ENCODE measurements at regions of chr16 and their contacts with region 1.

Region 1: DNA sequence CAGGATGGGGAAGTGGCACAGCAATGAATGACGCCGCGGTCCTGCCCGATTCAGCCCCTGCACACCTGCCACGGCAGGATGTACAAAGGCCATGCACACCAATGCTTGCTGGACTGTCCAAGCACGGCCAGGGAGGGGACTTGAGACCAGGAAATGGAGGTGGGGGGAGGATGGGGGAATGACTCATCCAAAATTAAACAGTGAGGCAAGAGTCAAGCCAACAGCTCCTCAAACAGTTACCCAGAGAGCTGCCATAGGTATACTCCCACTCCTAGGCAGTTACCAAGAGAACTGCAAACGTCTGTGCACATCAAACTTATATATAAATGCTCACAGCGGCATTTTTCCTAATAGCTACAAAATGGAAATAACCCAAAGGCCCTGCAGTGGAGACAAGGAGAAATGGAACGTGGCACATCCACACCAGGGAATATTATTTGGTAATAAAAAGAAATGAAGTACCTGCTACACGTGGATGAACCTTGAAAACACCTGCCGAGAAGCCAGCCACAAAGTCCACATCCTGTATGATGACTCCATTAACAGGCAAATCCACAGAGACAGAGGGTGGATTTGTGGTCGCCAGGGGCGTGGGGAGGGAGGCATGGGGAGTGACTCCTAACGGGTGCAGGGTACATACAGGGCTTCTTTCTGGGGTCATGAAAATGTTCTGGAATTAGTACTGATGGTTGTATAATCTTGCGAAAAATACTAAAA is 54.1 kb downstream of the VAC14 start:
- DNase-seq: peak; percentile 99
- ATAC-seq: peak; percentile 90
- H3K4me3 ChIP-seq: peak overlapping the region in 2 of 3 experiments; percentile 3 to 56; a peak in 2 of 6 replicates
- H3K27ac ChIP-seq: peak overlapping the region; percentile 93
- H3K4me1 ChIP-seq: peaks cover 56% of the 10 kb centered on the region
- H3K27me3 ChIP-seq: no peaks in the 10 kb centered on the region
- CTCF ChIP-seq: peak; percentile 40
- EP300 ChIP-seq: peak; percentile 92; a peak in 3 of 4 replicates
- POLR2A ChIP-seq: peak; percentile 70 to 75
- RAD21 ChIP-seq: no peak; the same call in 1 of the 2 replicates

Region 2: GRCh38 chr16:70523076-70523742 is 223.7 kb before region 1 on chr16 and contains the start of gene COG4:
- CTCF ChIA-PET with region 1: no interaction called
- POLR2A ChIA-PET with region 1: no interaction called
- in situ Hi-C with region 1: no loop called
- intact Hi-C with region 1: no loop called
- DNase-seq: peak; percentile 83
- ATAC-seq: peak; percentile 85
- H3K4me3 ChIP-seq: peak within 1 kb of the TSS; percentile 98 to 99 (median 99)
- H3K27ac ChIP-seq: peak within 1 kb of the TSS; percentile 93
- H3K4me1 ChIP-seq: peaks cover 40% of the 10 kb centered on the region
- H3K27me3 ChIP-seq: peaks cover 0 to 5% of the 10 kb centered on the region in 2 experiments; a peak in 1 of 5 replicates
- CTCF ChIP-seq: no peak
- EP300 ChIP-seq: peak in 1 of 2 experiments; percentile 3; a peak in 1 of 4 replicates
- POLR2A ChIP-seq: peak; percentile 73 to 94
- RAD21 ChIP-seq: no peak
- total RNA-seq, gene COG4: 73.8 and 85.7 TPM in 2 replicates

Region 3: DNA sequence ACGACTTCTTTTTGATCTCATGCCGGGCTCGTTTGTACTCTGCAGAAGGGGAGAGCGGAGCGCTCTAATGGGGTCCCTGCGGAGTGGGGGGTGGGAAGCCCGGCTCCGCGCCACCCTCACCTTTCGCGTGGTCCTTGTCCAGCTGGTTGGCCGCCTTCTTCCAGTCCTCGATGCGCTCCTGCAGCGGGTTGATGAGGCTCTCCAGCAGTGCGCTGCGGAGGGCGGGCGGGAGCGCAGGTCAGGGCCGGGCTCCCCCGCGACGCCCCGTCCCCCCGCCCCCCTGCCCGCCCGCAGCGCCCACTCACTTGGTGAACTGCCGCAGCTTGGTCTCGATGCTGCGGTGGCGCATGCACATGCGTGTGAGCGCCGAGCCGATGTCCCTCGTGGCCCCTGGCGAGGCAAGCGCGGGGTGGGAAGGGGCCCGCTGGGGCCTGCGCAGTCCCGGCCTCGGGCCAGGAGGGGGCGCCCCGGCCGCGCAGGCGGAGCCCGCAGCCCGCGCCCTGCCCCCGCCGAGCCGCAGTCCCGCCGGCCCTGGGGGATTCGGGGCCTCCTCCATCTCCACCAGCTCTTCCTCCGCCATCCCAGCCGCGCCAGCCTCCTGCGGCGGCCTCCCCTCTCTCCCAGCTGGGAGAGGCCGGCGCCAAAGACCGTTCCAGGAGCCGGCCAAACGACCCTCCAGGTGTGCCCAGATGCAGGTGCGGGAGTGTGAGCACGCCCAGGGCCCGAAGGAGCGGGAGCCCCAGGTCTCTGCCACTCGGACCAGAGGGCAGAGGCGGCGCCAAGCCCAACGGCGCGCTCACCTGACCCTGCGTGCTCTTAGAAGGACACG is 67.0 kb before region 1 on chr16:
- CTCF ChIA-PET with region 1: no interaction called
- POLR2A ChIA-PET with region 1: interaction called, 107 read pairs
- in situ Hi-C with region 1: no loop called
- intact Hi-C with region 1: loop called (anchors 2 kb)
- DNase-seq: no peak
- ATAC-seq: no peak
- H3K4me3 ChIP-seq: no peak overlapping the region; a peak in 1 of 6 replicates
- H3K27ac ChIP-seq: peak overlapping the region; percentile 91
- H3K4me1 ChIP-seq: peaks cover 39% of the 10 kb centered on the region
- H3K27me3 ChIP-seq: no peaks in the 10 kb centered on the region; a peak in 1 of 5 replicates
- CTCF ChIP-seq: peak; percentile 26; the same call in 1 of the 2 replicates
- EP300 ChIP-seq: no peak
- POLR2A ChIP-seq: no peak
- RAD21 ChIP-seq: peak; percentile 58; the same call in 1 of the 2 replicates

Region 4: DNA sequence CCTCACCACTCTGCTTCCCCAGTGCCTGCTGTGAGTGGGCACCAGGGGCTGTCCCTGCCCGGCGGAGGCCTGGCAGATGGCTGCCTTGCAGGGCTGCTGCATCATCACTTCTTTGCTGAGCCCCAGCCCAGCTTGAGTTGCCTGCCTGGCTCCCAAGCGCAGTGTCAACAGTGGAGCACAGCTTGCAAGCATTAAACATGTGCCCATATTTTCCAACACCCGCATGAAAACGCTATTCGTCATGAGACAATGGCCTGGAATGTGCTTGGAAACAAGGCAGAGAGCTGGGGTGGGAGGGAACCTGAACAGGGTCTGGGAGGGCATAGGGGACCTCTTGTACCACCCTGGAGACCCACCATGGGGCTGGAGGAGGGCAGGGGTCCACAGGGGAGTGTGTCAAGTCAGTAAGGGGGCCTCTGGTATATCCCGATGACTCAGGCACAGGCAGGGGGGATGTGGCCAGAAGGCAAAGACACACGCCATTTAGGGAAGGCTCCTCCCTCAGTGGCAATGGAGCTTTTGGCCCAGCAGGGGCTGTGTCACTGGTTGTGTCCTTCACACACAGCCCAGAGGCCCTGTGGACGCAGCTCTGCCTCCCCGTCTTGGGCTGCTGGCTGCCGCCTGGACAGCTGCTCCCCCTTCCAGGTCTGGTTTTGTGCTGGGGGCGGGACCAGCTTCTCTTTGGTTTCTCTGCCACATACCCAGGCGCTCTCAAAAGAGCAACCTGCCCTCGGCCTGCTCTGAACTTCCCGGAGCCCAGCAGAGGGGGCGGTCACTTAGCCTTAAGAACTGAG is 43.6 kb before region 1 on chr16:
- CTCF ChIA-PET with region 1: no interaction called
- POLR2A ChIA-PET with region 1: interaction called, 10 read pairs
- in situ Hi-C with region 1: no loop called
- intact Hi-C with region 1: no loop called
- DNase-seq: peak; percentile 79
- ATAC-seq: peak; percentile 91
- H3K4me3 ChIP-seq: peak overlapping the region in 1 of 3 experiments; percentile 21; a peak in 1 of 6 replicates
- H3K27ac ChIP-seq: peak overlapping the region; percentile 31
- H3K4me1 ChIP-seq: peaks cover 52% of the 10 kb centered on the region
- H3K27me3 ChIP-seq: no peaks in the 10 kb centered on the region
- CTCF ChIP-seq: peak; percentile 43
- EP300 ChIP-seq: no peak
- POLR2A ChIP-seq: 0 out of 4 replicates have a peak, but pooled peaks of 1 of the 2 experiments have one; percentile 21
- RAD21 ChIP-seq: peak; percentile 84

Region 5: GRCh38 chr16:70759666-70760065 is 12.8 kb after region 1 on chr16:
- CTCF ChIA-PET with region 1: no interaction called
- POLR2A ChIA-PET with region 1: interaction called, 32 read pairs
- in situ Hi-C with region 1: no loop called
- intact Hi-C with region 1: no loop called
- DNase-seq: no peak
- ATAC-seq: no peak
- H3K4me3 ChIP-seq: no peak overlapping the region
- H3K27ac ChIP-seq: peak overlapping the region; percentile 50
- H3K4me1 ChIP-seq: peaks cover 28% of the 10 kb centered on the region
- H3K27me3 ChIP-seq: no peaks in the 10 kb centered on the region
- CTCF ChIP-seq: 0 out of 2 replicates have a peak, but pooled peaks have one; percentile 15
- EP300 ChIP-seq: no peak
- POLR2A ChIP-seq: no peak
- RAD21 ChIP-seq: no peak